Gastrocnemius medialis (tissue), 4 donors: ENCODE measurements at regions of chr1 and their contacts with region 1.

Region 1: GRCh38 chr1:227961651-227962225 is 14.0 kb upstream of the WNT9A start:
- DNase-seq: no peak
- ATAC-seq: no peak
- H3K4me3 ChIP-seq: no peak overlapping the region
- H3K27ac ChIP-seq: no peak overlapping the region
- H3K4me1 ChIP-seq: no peaks in the 10 kb centered on the region
- H3K27me3 ChIP-seq: peaks cover 0 to under 1% (median 0%) of the 10 kb centered on the region in 3 donors
- CTCF ChIP-seq: no peak
- POLR2A ChIP-seq: no peak

Region 2: DNA sequence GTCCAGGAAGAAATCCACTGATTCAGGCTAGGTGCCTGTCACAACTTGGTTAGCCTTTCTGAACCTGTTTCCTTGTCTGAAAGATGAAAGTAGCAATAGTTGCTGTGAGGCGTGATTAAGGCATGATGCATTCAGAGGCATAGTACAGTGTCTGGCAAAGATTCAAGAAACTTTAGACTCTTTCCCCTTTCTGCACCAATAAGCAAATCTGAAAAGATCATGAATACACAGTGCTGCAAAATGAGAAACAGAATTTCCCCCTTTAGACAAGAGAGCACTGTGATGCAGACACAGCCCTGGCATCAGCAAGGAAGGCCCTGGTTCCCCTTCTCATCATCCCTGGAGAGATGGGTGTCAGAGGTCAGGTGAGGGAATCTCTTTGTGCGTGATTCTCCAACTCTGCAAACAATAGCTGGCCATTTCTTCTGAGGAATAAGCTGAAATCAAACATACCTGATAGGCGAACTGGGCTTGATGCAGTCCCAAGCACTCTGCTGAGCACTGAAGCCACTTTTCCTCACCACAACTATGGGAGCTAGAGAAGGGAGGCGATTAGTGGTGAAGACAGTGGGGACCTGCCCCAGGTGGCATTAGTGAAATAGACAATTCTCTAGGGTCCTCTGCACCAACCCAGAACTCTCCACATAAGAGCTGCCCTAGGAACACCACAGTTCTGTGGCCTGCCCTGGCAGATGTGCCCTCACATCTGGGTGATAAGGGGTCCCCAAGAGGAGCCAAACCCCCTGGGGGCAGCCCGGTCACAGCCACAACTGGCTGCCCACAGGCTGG is 1264.4 kb before region 1 on chr1:
- in situ Hi-C with region 1: no loop called
- intact Hi-C with region 1: no loop called
- DNase-seq: no peak
- ATAC-seq: peak in 1 of 2 donors; percentile 34
- H3K4me3 ChIP-seq: no peak overlapping the region
- H3K27ac ChIP-seq: peak overlapping the region; percentile 60 to 74 (median 63)
- H3K4me1 ChIP-seq: peaks cover 56 to 71% of the 10 kb centered on the region in 2 donors
- H3K27me3 ChIP-seq: no peaks in the 10 kb centered on the region
- CTCF ChIP-seq: no peak
- POLR2A ChIP-seq: no peak

Region 3: GRCh38 chr1:227482023-227482299 is 479.8 kb before region 1 on chr1:
- in situ Hi-C with region 1: loop called (anchors 5 to 25 kb)
- intact Hi-C with region 1: no loop called
- DNase-seq: no peak
- ATAC-seq: no peak
- H3K4me3 ChIP-seq: no peak overlapping the region
- H3K27ac ChIP-seq: no peak overlapping the region
- H3K4me1 ChIP-seq: no peaks in the 10 kb centered on the region
- H3K27me3 ChIP-seq: no peaks in the 10 kb centered on the region
- CTCF ChIP-seq: no peak
- POLR2A ChIP-seq: no peak